Vagina (tissue), 2 donors: ENCODE measurements at regions of chr11 and their contacts with region 1.

Region 1: GRCh38 chr11:43462359-43462758 is 103.6 kb downstream of the TTC17 start:
- DNase-seq: no peak
- H3K4me3 ChIP-seq: no peak overlapping the region
- H3K27ac ChIP-seq: no peak overlapping the region
- H3K4me1 ChIP-seq: no peaks in the 10 kb centered on the region
- H3K27me3 ChIP-seq: no peaks in the 10 kb centered on the region
- CTCF ChIP-seq: no peak
- POLR2A ChIP-seq: no peak

Region 2: GRCh38 chr11:43393765-43394355 is 68.5 kb before region 1 on chr11:
- intact Hi-C with region 1: loop called (anchors 5 kb)
- DNase-seq: no peak
- H3K4me3 ChIP-seq: no peak overlapping the region
- H3K27ac ChIP-seq: no peak overlapping the region
- H3K4me1 ChIP-seq: no peaks in the 10 kb centered on the region
- H3K27me3 ChIP-seq: no peaks in the 10 kb centered on the region
- CTCF ChIP-seq: no peak
- POLR2A ChIP-seq: no peak

Region 3: GRCh38 chr11:43434893-43435292 is 27.5 kb before region 1 on chr11:
- intact Hi-C with region 1: no loop called
- DNase-seq: no peak
- H3K4me3 ChIP-seq: no peak overlapping the region
- H3K27ac ChIP-seq: no peak overlapping the region
- H3K4me1 ChIP-seq: no peaks in the 10 kb centered on the region
- H3K27me3 ChIP-seq: no peaks in the 10 kb centered on the region
- CTCF ChIP-seq: no peak
- POLR2A ChIP-seq: no peak

Region 4: GRCh38 chr11:43497144-43497543 is 34.8 kb after region 1 on chr11:
- intact Hi-C with region 1: no loop called
- DNase-seq: no peak
- H3K4me3 ChIP-seq: no peak overlapping the region
- H3K27ac ChIP-seq: no peak overlapping the region
- H3K4me1 ChIP-seq: no peaks in the 10 kb centered on the region
- H3K27me3 ChIP-seq: no peaks in the 10 kb centered on the region
- CTCF ChIP-seq: no peak
- POLR2A ChIP-seq: no peak